CD8-positive, alpha-beta T cell (primary cell): ENCODE measurements at regions of chr6 and their contacts with region 1.

Region 1: DNA sequence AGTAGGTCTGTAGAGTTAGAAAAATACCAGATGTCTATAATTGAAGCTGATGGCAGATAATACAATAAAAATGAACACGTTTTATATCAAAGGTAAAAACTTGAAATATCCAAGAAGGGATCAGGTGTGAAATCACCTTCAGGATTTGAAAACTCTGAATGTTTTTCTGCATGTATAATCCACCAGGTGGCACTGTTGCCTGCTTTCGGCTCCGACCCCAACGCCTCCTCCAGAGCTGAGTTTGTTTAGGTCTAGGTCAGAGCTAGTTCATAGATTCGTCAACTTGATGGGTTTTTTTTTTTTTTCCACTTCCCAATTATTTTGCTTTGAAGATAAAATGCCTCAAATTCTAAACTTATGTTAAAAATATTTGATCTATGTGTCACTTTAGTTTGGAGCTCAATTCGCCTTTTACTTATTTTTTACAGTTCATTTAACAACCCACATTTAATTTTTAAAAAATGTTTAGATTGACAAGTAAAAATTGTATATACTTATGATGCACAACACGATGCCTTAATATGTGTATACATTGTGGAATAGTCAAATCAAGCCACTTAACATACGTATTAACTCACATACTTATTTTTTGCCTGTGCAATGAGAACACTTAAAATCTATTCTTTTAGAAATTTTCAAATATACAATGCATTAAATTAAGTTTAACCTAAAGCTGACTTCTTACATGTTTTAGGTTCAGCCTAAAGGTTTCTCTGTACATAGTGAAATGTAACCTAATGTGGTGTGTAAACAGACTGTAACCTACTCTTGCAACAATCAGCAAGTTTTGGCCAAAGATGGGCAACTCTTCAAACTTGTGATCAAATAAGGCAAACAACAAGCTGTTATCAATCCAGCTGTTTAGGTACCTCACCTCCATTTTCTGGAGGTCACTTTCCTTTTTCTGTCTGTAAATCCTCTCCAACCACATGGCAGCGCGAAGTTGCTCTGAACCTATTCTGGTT is 39.4 kb upstream of the ENPP4 start:
- DNase-seq: peak; percentile 6 to 73 (median 62)
- ATAC-seq: no peak
- H3K4me3 ChIP-seq: no peak overlapping the region
- H3K4me3 Mint-ChIP-seq: no peak overlapping the region
- H3K27ac ChIP-seq: no peak overlapping the region
- H3K27ac Mint-ChIP-seq: no peak overlapping the region
- H3K4me1 ChIP-seq: no peaks in the 10 kb centered on the region
- H3K4me1 Mint-ChIP-seq: no peaks in the 10 kb centered on the region
- H3K27me3 ChIP-seq: no peaks in the 10 kb centered on the region
- H3K27me3 Mint-ChIP-seq: peaks cover 36% of the 10 kb centered on the region
- CTCF ChIP-seq: peak; percentile 95

Region 2: GRCh38 chr6:46078294-46078693 is 12.1 kb before region 1 on chr6:
- CTCF ChIA-PET with region 1: interaction called, 12 read pairs
- POLR2A ChIA-PET with region 1: no interaction called
- intact Hi-C with region 1: no loop called
- DNase-seq: no peak
- ATAC-seq: no peak
- H3K4me3 ChIP-seq: no peak overlapping the region
- H3K4me3 Mint-ChIP-seq: no peak overlapping the region
- H3K27ac ChIP-seq: no peak overlapping the region
- H3K27ac Mint-ChIP-seq: no peak overlapping the region
- H3K4me1 ChIP-seq: no peaks in the 10 kb centered on the region
- H3K4me1 Mint-ChIP-seq: peaks cover 4% of the 10 kb centered on the region
- H3K27me3 ChIP-seq: no peaks in the 10 kb centered on the region
- H3K27me3 Mint-ChIP-seq: no peaks in the 10 kb centered on the region
- CTCF ChIP-seq: no peak

Region 3: GRCh38 chr6:46221222-46221793 is 130.9 kb after region 1 on chr6:
- CTCF ChIA-PET with region 1: interaction called, 7 read pairs
- POLR2A ChIA-PET with region 1: no interaction called
- intact Hi-C with region 1: loop called (anchors 5 kb)
- DNase-seq: peak in 2 of 9 experiments; percentile 45 to 52
- ATAC-seq: no peak
- H3K4me3 ChIP-seq: no peak overlapping the region
- H3K4me3 Mint-ChIP-seq: no peak overlapping the region
- H3K27ac ChIP-seq: no peak overlapping the region
- H3K27ac Mint-ChIP-seq: no peak overlapping the region
- H3K4me1 ChIP-seq: no peaks in the 10 kb centered on the region
- H3K4me1 Mint-ChIP-seq: no peaks in the 10 kb centered on the region
- H3K27me3 ChIP-seq: no peaks in the 10 kb centered on the region
- H3K27me3 Mint-ChIP-seq: no peaks in the 10 kb centered on the region
- CTCF ChIP-seq: peak; percentile 41

Region 4: DNA sequence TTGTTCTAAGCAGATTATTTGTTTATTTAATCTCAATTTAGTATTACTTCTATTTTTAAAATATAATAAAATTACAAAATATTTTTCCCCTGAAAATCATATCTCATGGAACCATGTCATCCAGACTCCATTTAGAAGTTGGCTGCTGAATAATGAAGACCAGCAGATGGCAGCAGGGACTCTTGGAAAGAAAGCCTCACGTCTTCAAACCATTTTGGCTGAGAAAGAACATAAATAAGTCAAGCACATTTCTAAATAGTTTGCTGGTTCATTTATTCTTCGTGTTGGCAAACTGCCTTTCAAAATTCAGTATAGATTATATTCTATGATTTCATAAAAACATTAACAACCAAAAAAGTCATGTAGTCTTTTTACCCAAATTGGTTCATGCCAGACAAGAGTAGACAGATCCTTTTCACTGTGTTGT is 329.2 kb after region 1 on chr6:
- CTCF ChIA-PET with region 1: interaction called, 11 read pairs
- POLR2A ChIA-PET with region 1: no interaction called
- intact Hi-C with region 1: no loop called
- DNase-seq: peak in 2 of 9 experiments; percentile 30 to 46
- ATAC-seq: no peak
- H3K4me3 ChIP-seq: no peak overlapping the region
- H3K4me3 Mint-ChIP-seq: no peak overlapping the region
- H3K27ac ChIP-seq: no peak overlapping the region
- H3K27ac Mint-ChIP-seq: no peak overlapping the region
- H3K4me1 ChIP-seq: no peaks in the 10 kb centered on the region
- H3K4me1 Mint-ChIP-seq: no peaks in the 10 kb centered on the region
- H3K27me3 ChIP-seq: no peaks in the 10 kb centered on the region
- H3K27me3 Mint-ChIP-seq: peaks cover 19% of the 10 kb centered on the region
- CTCF ChIP-seq: peak; percentile 31

Region 5: GRCh38 chr6:46781478-46782378 is 691.3 kb after region 1 on chr6:
- CTCF ChIA-PET with region 1: no interaction called
- POLR2A ChIA-PET with region 1: no interaction called
- intact Hi-C with region 1: loop called in 1 of 2 experiments (anchors 10 kb)
- DNase-seq: peak in 3 of 9 experiments; percentile 3 to 24 (median 15)
- ATAC-seq: no peak
- H3K4me3 ChIP-seq: no peak overlapping the region
- H3K4me3 Mint-ChIP-seq: no peak overlapping the region
- H3K27ac ChIP-seq: no peak overlapping the region
- H3K27ac Mint-ChIP-seq: no peak overlapping the region
- H3K4me1 ChIP-seq: no peaks in the 10 kb centered on the region
- H3K4me1 Mint-ChIP-seq: no peaks in the 10 kb centered on the region
- H3K27me3 ChIP-seq: no peaks in the 10 kb centered on the region
- H3K27me3 Mint-ChIP-seq: peaks cover 8% of the 10 kb centered on the region
- CTCF ChIP-seq: no peak

Region 6: DNA sequence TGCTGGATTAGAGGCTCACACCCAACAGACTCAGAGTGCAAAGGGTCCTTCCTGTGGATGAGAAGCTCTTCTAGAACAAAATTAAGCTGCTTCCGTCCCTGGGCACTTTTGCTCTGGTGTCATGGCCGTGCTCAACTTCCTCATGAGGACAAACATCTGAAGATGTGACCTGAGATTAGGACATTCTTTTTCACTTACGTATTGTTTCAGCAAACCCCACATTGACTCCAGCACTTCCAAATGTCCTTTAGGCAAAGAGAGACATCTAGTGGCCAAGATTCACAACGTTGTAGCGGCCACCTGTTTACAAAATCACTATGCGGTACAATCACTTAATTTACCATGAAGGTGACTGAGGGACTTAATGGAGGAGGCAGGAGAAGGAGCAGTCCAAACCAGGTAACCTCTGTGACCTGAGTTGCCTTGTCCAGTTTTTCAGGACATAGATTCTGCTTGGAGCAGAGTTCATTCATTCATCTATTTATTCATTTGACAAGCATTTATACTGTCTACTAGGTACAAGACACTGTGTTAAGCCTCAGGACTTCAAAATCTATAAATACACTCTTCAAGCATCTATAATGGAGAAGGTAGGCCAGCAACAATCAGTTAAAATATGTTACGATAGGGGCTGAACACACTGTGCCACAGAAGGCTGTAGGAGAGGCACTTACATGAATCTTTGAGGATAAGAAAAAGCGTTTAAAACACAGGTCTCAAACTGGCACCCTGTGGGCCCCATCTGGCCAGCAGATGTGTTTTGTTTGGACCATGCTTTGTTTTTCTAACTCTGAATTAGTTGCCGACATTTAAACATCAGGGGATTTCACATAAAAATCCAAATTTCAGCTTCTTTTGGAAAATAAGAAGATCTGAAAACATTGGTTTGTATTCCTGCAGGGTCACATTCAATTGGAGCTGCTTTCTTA is 957.3 kb after region 1 on chr6:
- CTCF ChIA-PET with region 1: no interaction called
- POLR2A ChIA-PET with region 1: no interaction called
- intact Hi-C with region 1: loop called in 1 of 2 experiments (anchors 5 kb)
- DNase-seq: peak in 5 of 9 experiments; percentile 1 to 42 (median 16)
- ATAC-seq: no peak
- H3K4me3 ChIP-seq: no peak overlapping the region
- H3K4me3 Mint-ChIP-seq: no peak overlapping the region
- H3K27ac ChIP-seq: no peak overlapping the region
- H3K27ac Mint-ChIP-seq: no peak overlapping the region
- H3K4me1 ChIP-seq: no peaks in the 10 kb centered on the region
- H3K4me1 Mint-ChIP-seq: peaks cover 3% of the 10 kb centered on the region
- H3K27me3 ChIP-seq: no peaks in the 10 kb centered on the region
- H3K27me3 Mint-ChIP-seq: peaks cover 8% of the 10 kb centered on the region
- CTCF ChIP-seq: peak; percentile 46